IMR-90 (cell line): ENCODE measurements at regions of chr15 and their contacts with region 1.

Region 1: DNA sequence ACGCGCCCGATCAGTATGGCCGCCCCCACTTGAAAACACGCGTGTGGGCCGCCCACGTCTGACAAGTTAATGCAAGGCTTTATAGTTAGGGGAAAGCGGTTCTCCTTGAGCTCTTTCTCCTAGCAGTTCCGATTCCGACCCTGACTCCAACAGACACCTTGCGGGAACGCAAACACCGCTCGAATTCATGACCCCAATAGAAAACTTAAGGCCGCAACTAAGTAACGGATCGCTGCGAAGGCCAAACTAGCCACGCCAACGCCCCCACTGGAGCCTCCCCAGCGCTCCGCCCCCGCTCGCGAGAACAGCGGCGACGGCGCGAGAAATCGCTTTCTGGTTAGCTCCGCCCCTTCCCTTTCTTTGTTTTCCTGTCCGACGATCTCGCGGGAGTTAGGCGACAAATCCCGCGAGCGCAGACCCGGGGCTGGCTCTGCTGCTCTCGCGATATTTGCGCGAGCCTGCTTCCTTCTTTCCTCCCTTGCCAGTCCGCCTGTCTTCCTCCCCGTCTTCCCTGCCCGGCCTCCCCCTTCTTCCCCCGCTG is at the start of gene IREB2:
- DNase-seq: peak; percentile 98
- ATAC-seq: peak; percentile 95
- H3K4me3 ChIP-seq: peak within 1 kb of the TSS; percentile 96
- H3K27ac ChIP-seq: peak within 1 kb of the TSS; percentile 89
- H3K4me1 ChIP-seq: no peaks in the 10 kb centered on the region
- H3K27me3 ChIP-seq: no peaks in the 10 kb centered on the region
- CTCF ChIP-seq: no peak
- POLR2A ChIP-seq: peak; percentile 66; the same call in 1 of the 2 replicates
- RAD21 ChIP-seq: no peak
- total RNA-seq, gene IREB2: 12.2 and 23.6 TPM in 2 replicates

Region 2: GRCh38 chr15:77959432-77959879 is 478.4 kb before region 1 on chr15:
- CTCF ChIA-PET with region 1: no interaction called
- POLR2A ChIA-PET with region 1: no interaction called
- dilution Hi-C with region 1: no loop called
- in situ Hi-C with region 1: loop called (anchors 25 kb)
- intact Hi-C with region 1: no loop called
- DNase-seq: peak; percentile 41
- ATAC-seq: peak; percentile 100
- H3K4me3 ChIP-seq: no peak overlapping the region
- H3K27ac ChIP-seq: no peak overlapping the region
- H3K4me1 ChIP-seq: no peaks in the 10 kb centered on the region
- H3K27me3 ChIP-seq: peaks cover 46% of the 10 kb centered on the region
- CTCF ChIP-seq: peak; percentile 90
- POLR2A ChIP-seq: no peak
- RAD21 ChIP-seq: peak; percentile 92

Region 3: DNA sequence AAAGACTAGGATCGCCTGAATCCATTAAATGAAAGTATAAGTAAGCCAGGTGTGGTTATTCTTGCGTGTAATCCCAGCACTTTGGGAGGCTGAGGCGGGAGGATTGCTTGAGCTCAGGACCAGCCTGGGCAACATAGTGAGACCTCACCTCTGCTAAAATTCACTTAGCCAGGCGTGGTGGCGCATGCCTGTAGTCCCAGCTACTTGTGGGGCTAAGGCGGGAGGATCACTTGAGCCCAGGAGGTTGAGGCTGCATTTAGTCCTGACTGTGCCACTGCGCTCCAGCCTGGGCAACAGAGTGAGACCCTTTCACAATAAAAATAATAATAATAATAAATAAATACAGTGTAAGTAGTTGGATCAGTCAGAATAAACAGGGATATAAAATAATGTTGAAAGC is 44.1 kb after region 1 on chr15:
- CTCF ChIA-PET with region 1: no interaction called
- POLR2A ChIA-PET with region 1: no interaction called
- dilution Hi-C with region 1: no loop called
- in situ Hi-C with region 1: no loop called
- intact Hi-C with region 1: loop called (anchors 5 kb)
- DNase-seq: no peak
- ATAC-seq: peak; percentile 11; the same call in 1 of the 2 replicates
- H3K4me3 ChIP-seq: no peak overlapping the region
- H3K27ac ChIP-seq: no peak overlapping the region
- H3K4me1 ChIP-seq: peaks cover 2% of the 10 kb centered on the region; the same call in 1 of the 2 replicates
- H3K27me3 ChIP-seq: no peaks in the 10 kb centered on the region
- CTCF ChIP-seq: no peak
- POLR2A ChIP-seq: no peak
- RAD21 ChIP-seq: no peak